Activated B cell treated with CpG ODN at 0.5 μM for 24 hours (primary cell): ENCODE measurements at regions of chr14 and their contacts with region 1.

Region 1: DNA sequence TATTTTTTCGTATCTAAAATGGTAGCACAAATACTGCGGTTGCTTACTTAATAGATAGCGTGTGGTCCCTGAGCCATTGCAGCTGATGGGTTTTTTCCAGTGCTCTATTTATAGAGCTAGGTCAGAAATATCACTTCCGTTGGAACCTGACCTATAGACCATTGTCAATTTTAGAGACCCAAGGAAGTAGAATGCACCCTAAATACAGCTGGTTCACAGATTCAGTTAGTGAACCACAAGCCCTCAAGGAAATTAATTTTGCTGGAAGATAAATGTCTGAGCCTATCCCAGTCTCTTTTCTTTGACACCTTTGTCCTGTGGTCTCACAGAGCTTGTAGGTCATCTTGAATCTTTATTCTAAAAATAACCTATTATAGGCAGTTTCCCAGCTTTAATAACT is 391.0 kb downstream of the ZFP36L1 start:
- DNase-seq: no peak
- ATAC-seq: peak; percentile 59
- H3K4me3 Mint-ChIP-seq: peak overlapping the region; percentile 72
- H3K27ac Mint-ChIP-seq: peak overlapping the region; percentile 92
- H3K4me1 Mint-ChIP-seq: peaks cover 92% of the 10 kb centered on the region
- H3K27me3 Mint-ChIP-seq: no peaks in the 10 kb centered on the region
- CTCF ChIP-seq: no peak

Region 2: GRCh38 chr14:68292441-68293215 is 109.2 kb before region 1 on chr14:
- CTCF ChIA-PET with region 1: interaction called, 3 read pairs
- POLR2A ChIA-PET with region 1: interaction called, 340 read pairs
- intact Hi-C with region 1: no loop called
- DNase-seq: no peak
- ATAC-seq: peak; percentile 35
- H3K4me3 Mint-ChIP-seq: peak overlapping the region; percentile 59
- H3K27ac Mint-ChIP-seq: peak overlapping the region; percentile 96
- H3K4me1 Mint-ChIP-seq: peaks cover 77% of the 10 kb centered on the region
- H3K27me3 Mint-ChIP-seq: no peaks in the 10 kb centered on the region
- CTCF ChIP-seq: no peak

Region 3: DNA sequence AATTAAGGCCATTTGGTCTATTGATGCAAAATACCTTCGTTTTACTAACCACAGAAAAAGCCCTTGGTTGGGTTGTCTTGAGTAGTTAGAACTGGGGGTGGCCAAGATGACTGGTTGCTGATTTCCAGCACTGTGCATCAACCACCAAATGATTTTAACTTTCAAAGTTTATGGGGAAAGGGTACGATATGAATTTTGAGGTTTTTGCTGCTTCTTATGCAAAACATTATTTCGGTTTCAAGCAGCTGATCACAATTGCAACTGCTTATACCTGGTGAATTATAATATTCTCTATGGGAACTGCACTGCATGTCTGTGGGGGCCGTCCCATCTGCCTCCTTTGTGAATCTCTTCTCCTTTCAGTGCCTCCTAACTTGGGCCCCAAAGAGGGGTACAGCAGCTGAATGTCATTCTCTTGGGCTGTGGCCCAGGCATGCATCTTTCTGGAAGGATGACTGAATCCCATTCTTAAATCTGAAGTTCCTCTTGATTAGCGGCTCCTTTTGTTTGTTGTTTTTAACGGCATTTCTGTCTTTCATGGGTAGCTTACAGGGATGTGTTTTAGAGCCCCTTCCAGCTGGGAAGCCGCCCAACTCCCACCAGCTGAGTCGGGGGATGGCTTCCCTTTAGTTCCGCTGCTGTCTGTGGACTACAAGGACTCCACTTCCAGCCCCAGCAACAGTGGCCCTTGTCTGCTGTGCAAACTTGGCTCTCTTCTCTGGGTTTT is 88.8 kb before region 1 on chr14:
- CTCF ChIA-PET with region 1: no interaction called
- POLR2A ChIA-PET with region 1: interaction called, 35 read pairs
- intact Hi-C with region 1: loop called (anchors 1 kb)
- DNase-seq: no peak
- ATAC-seq: peak; percentile 84
- H3K4me3 Mint-ChIP-seq: peak overlapping the region; percentile 62
- H3K27ac Mint-ChIP-seq: peak overlapping the region; percentile 94
- H3K4me1 Mint-ChIP-seq: peaks cover 91% of the 10 kb centered on the region
- H3K27me3 Mint-ChIP-seq: no peaks in the 10 kb centered on the region
- CTCF ChIP-seq: no peak

Region 4: GRCh38 chr14:68369281-68370056 is 32.4 kb before region 1 on chr14:
- CTCF ChIA-PET with region 1: interaction called, 10 read pairs
- POLR2A ChIA-PET with region 1: interaction called, 38 read pairs
- intact Hi-C with region 1: loop called (anchors 5 kb)
- DNase-seq: no peak
- ATAC-seq: peak; percentile 23
- H3K4me3 Mint-ChIP-seq: peak overlapping the region; percentile 59
- H3K27ac Mint-ChIP-seq: peak overlapping the region; percentile 95
- H3K4me1 Mint-ChIP-seq: peaks cover 94% of the 10 kb centered on the region
- H3K27me3 Mint-ChIP-seq: no peaks in the 10 kb centered on the region
- CTCF ChIP-seq: no peak

Region 5: DNA sequence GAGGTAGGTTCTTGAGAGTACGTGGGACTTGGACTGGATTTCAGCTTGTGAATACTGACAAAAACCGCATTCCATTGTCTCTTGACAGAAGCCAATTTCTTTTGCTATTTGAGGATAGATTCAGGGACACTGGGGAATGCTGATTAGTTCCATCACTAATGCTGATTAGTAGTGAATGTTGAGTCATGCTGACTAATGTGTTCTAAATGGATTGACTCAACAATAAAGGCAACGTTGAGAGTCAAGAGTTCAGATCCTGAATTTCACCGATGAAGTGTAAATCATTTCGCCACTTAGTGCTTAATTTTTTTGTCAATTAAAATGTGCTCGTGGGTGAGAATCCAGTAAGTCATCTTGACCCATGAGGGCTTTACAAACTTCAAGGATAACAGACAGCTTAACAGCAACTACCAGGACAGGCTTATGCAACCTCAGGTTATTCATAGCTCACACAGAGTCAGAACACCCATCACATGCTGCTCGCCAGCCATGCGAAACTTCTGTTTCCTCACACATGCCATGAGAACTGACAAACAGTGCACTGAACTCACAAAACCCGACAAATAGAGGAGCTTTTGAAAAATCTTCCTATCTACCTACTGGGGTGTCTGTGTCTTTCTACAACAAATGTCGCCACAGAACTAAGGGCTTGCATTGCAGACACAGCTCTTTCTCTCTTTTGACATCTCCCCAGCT is 74.5 kb after region 1 on chr14:
- CTCF ChIA-PET with region 1: no interaction called
- POLR2A ChIA-PET with region 1: interaction called, 15 read pairs
- intact Hi-C with region 1: loop called (anchors 2 kb)
- DNase-seq: peak; percentile 40
- ATAC-seq: peak; percentile 83
- H3K4me3 Mint-ChIP-seq: peak overlapping the region; percentile 62
- H3K27ac Mint-ChIP-seq: peak overlapping the region; percentile 99
- H3K4me1 Mint-ChIP-seq: peaks cover 89% of the 10 kb centered on the region
- H3K27me3 Mint-ChIP-seq: no peaks in the 10 kb centered on the region
- CTCF ChIP-seq: no peak

Region 6: GRCh38 chr14:68627880-68628607 is 226.2 kb after region 1 on chr14:
- CTCF ChIA-PET with region 1: no interaction called
- POLR2A ChIA-PET with region 1: no interaction called
- intact Hi-C with region 1: no loop called
- DNase-seq: peak; percentile 52
- ATAC-seq: peak; percentile 76
- H3K4me3 Mint-ChIP-seq: peak overlapping the region; percentile 80
- H3K27ac Mint-ChIP-seq: peak overlapping the region; percentile 80
- H3K4me1 Mint-ChIP-seq: peaks cover 28% of the 10 kb centered on the region
- H3K27me3 Mint-ChIP-seq: no peaks in the 10 kb centered on the region
- CTCF ChIP-seq: no peak